Pancreas (tissue), 10 donors: ENCODE measurements at regions of chr10 and their contacts with region 1.

Region 1: GRCh38 chr10:15370856-15371701 is at the start of gene FAM171A1:
- DNase-seq: peak; percentile 63 to 89 (median 74)
- ATAC-seq: peak; percentile 79 to 89 (median 88)
- H3K4me3 ChIP-seq: peak within 1 kb of the TSS; percentile 47 to 63 (median 58)
- H3K27ac ChIP-seq: peak within 1 kb of the TSS in 3 of 4 donors; percentile 44 to 66 (median 65)
- H3K4me1 ChIP-seq: no peaks in the 10 kb centered on the region
- H3K27me3 ChIP-seq: no peaks in the 10 kb centered on the region
- CTCF ChIP-seq: no peak
- total RNA-seq, gene FAM171A1: 17.8 to 34.1 (median 21.9) TPM

Region 2: GRCh38 chr10:15209827-15210509 is 161.1 kb before region 1 on chr10:
- intact Hi-C with region 1: loop called in 1 of 3 experiments (anchors 10 kb)
- DNase-seq: peak; percentile 67 to 85 (median 81)
- ATAC-seq: peak; percentile 92 to 96 (median 93)
- H3K4me3 ChIP-seq: no peak overlapping the region
- H3K27ac ChIP-seq: no peak overlapping the region
- H3K4me1 ChIP-seq: no peaks in the 10 kb centered on the region
- H3K27me3 ChIP-seq: no peaks in the 10 kb centered on the region
- CTCF ChIP-seq: peak; percentile 78 to 86 (median 82)

Region 3: DNA sequence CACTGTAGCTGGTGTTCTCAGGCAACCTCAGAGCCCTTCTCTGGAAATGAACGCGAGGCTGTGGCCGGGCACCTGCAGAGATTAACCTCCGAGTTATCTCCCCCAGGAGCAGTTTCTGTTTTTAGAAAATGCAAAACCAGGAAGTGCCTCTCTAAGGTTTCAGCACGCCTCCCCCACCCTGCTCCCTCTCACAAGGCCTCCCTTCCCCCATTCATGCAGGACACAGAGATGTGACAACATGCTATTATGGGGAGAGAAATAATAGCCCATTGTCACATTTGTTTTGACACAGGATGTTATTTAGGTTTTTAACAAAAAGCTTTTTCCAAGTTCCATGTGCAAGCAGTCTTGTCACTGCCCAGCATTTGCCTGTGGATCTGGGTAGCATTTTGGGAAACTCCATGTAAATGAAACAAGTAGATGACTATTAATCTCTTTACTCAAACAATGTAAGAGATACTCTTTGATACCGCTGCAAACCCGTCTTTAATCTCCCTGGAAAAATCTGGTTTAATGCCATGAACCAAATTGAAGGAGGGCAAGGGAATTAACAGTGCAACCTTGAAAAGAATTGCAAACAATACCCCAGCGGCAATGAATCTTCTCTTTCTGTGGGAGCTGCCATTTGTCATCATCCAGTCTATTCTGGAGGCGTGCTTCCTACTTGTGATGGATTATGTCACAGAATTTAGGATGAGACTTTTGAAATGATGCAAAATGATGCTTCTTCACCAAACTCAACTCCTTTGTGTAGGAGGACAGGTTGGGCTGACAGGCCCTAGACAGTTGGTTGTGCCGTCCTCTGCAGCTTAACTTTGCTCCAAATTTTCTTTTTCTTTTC is 116.1 kb before region 1 on chr10:
- intact Hi-C with region 1: loop called in 2 of 3 experiments (anchors 5 to 10 kb)
- DNase-seq: peak in 3 of 6 donors; percentile 27 to 55 (median 39)
- ATAC-seq: peak; percentile 78 to 88 (median 84)
- H3K4me3 ChIP-seq: peak overlapping the region in 3 of 4 donors; percentile 5 to 45 (median 29)
- H3K27ac ChIP-seq: peak overlapping the region; percentile 7 to 90 (median 56)
- H3K4me1 ChIP-seq: peaks cover 0 to 9% (median 2%) of the 10 kb centered on the region in 3 donors
- H3K27me3 ChIP-seq: no peaks in the 10 kb centered on the region
- CTCF ChIP-seq: no peak